ENCODE measurements at regions of chr10 and their contacts with region 1.

Region 1: GRCh38 chr10:96831867-96832720 is at the start of gene LCOR:
- DNase-seq: peak; percentile 75 to 88 (median 84)
- ATAC-seq: peak; percentile 85
- H3K4me3 ChIP-seq: peak within 1 kb of the TSS; percentile 65
- H3K4me3 Mint-ChIP-seq: peak within 1 kb of the TSS; percentile 84 to 96 (median 93)
- H3K27ac ChIP-seq: peak within 1 kb of the TSS; percentile 88
- H3K27ac Mint-ChIP-seq: peak within 1 kb of the TSS; percentile 88 to 99 (median 94)
- H3K4me1 ChIP-seq: peaks cover 25 to 26% of the 10 kb centered on the region in 2 donors
- H3K4me1 Mint-ChIP-seq: peaks cover 36 to 57% (median 51%) of the 10 kb centered on the region in 7 donors
- H3K27me3 ChIP-seq: no peaks in the 10 kb centered on the region
- H3K27me3 Mint-ChIP-seq: peaks cover 0 to 8% (median 0%) of the 10 kb centered on the region in 5 donors
- total RNA-seq, gene LCOR: 25.3 to 55.9 (median 51.8) TPM

Region 2: GRCh38 chr10:95693668-95694534 is 1138.2 kb before region 1 on chr10 and contains the start of gene TCTN3:
- CTCF ChIA-PET with region 1: no interaction called
- POLR2A ChIA-PET with region 1: interaction called, 3 read pairs
- intact Hi-C with region 1: loop called (anchors 2 to 10 kb)
- DNase-seq: peak; percentile 85 to 98 (median 97)
- ATAC-seq: peak; percentile 98
- H3K4me3 ChIP-seq: peak within 1 kb of the TSS; percentile 93
- H3K4me3 Mint-ChIP-seq: peak within 1 kb of the TSS; percentile 89 to 99 (median 96)
- H3K27ac ChIP-seq: peak within 1 kb of the TSS; percentile 95
- H3K27ac Mint-ChIP-seq: peak within 1 kb of the TSS; percentile 91 to 98 (median 96)
- H3K4me1 ChIP-seq: peaks cover 11 to 15% of the 10 kb centered on the region in 2 donors
- H3K4me1 Mint-ChIP-seq: peaks cover 27 to 51% (median 42%) of the 10 kb centered on the region in 7 donors
- H3K27me3 ChIP-seq: no peaks in the 10 kb centered on the region
- H3K27me3 Mint-ChIP-seq: peaks cover 0 to 9% (median 2%) of the 10 kb centered on the region in 5 donors
- total RNA-seq, gene TCTN3: 16.2 to 38.3 (median 22.2) TPM

Region 3: GRCh38 chr10:96395931-96396877 is 435.9 kb before region 1 on chr10:
- CTCF ChIA-PET with region 1: interaction called, 3 read pairs
- POLR2A ChIA-PET with region 1: no interaction called
- intact Hi-C with region 1: loop called (anchors 1 kb)
- DNase-seq: peak; percentile 35 to 67 (median 56)
- ATAC-seq: peak; percentile 89
- H3K4me3 ChIP-seq: peak overlapping the region; percentile 28
- H3K4me3 Mint-ChIP-seq: peak overlapping the region in 7 of 10 donors; percentile 6 to 80 (median 66)
- H3K27ac ChIP-seq: no peak overlapping the region
- H3K27ac Mint-ChIP-seq: no peak overlapping the region
- H3K4me1 ChIP-seq: no peaks in the 10 kb centered on the region
- H3K4me1 Mint-ChIP-seq: peaks cover 0 to 5% (median 0%) of the 10 kb centered on the region in 7 donors
- H3K27me3 ChIP-seq: no peaks in the 10 kb centered on the region
- H3K27me3 Mint-ChIP-seq: peaks cover 7 to 52% (median 16%) of the 10 kb centered on the region in 5 donors

Region 4: GRCh38 chr10:96642973-96643372 is 189.1 kb before region 1 on chr10:
- CTCF ChIA-PET with region 1: interaction called, 3 read pairs
- POLR2A ChIA-PET with region 1: no interaction called
- intact Hi-C with region 1: loop called (anchors 1 kb)
- DNase-seq: peak in 2 of 9 donors; percentile 33 to 57
- ATAC-seq: peak; percentile 63
- H3K4me3 ChIP-seq: no peak overlapping the region
- H3K4me3 Mint-ChIP-seq: no peak overlapping the region
- H3K27ac ChIP-seq: no peak overlapping the region
- H3K27ac Mint-ChIP-seq: no peak overlapping the region
- H3K4me1 ChIP-seq: no peaks in the 10 kb centered on the region
- H3K4me1 Mint-ChIP-seq: peaks cover 0 to 22% (median 4%) of the 10 kb centered on the region in 7 donors
- H3K27me3 ChIP-seq: no peaks in the 10 kb centered on the region
- H3K27me3 Mint-ChIP-seq: peaks cover 0 to 8% (median 0%) of the 10 kb centered on the region in 5 donors

Region 5: DNA sequence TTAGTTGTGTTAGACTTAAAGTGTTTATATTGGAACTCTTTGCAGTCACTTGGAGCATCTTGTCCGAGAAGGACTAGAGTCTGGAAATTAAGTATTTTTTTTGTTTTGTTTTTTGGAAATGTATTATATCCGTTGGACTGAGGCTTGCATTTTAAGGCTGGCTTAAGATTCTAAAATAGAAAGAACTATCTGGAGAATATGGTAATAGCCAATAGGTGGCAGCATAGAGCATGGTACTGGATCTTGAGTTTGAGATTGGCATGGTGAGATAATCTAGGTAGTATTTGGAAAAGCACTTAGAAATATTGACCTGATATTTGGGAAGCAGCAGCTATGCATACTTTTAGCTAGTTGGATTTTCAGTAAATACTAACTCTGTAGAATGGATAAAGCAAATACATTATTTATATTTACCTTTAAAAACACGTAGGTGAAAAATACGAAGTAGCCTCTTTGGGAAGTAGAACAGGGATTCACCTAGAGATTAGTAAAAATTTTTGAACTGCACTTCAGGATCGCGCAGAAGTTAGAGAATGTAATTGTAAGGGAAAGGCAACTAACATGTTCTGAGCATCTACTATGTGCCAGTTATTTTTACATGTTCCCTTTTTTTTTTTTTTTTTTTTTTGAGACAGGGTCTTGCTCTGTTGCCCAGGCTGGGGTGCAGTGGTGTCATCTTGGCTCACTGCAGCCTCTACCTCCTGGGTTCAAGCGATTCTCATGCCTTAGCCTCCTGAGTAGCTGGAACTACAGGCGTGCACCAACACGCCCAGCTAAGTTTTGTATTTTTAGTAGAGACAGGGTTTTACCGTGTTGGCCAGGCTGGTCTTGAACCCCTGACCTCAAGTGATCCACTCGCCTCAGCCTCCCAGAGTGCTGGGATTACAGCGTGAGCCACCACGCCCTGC is 78.6 kb after region 1 on chr10:
- CTCF ChIA-PET with region 1: interaction called, 3 read pairs
- POLR2A ChIA-PET with region 1: no interaction called
- intact Hi-C with region 1: loop called in 1 of 2 experiments (anchors 5 kb)
- DNase-seq: peak in 5 of 9 donors; percentile 15 to 36 (median 29)
- ATAC-seq: peak; percentile 80
- H3K4me3 ChIP-seq: no peak overlapping the region
- H3K4me3 Mint-ChIP-seq: no peak overlapping the region
- H3K27ac ChIP-seq: no peak overlapping the region
- H3K27ac Mint-ChIP-seq: peak overlapping the region in 1 of 9 donors; percentile 4
- H3K4me1 ChIP-seq: peaks cover 3 to 4% of the 10 kb centered on the region in 2 donors
- H3K4me1 Mint-ChIP-seq: peaks cover 3 to 51% (median 33%) of the 10 kb centered on the region in 7 donors
- H3K27me3 ChIP-seq: no peaks in the 10 kb centered on the region
- H3K27me3 Mint-ChIP-seq: no peaks in the 10 kb centered on the region

Region 6: DNA sequence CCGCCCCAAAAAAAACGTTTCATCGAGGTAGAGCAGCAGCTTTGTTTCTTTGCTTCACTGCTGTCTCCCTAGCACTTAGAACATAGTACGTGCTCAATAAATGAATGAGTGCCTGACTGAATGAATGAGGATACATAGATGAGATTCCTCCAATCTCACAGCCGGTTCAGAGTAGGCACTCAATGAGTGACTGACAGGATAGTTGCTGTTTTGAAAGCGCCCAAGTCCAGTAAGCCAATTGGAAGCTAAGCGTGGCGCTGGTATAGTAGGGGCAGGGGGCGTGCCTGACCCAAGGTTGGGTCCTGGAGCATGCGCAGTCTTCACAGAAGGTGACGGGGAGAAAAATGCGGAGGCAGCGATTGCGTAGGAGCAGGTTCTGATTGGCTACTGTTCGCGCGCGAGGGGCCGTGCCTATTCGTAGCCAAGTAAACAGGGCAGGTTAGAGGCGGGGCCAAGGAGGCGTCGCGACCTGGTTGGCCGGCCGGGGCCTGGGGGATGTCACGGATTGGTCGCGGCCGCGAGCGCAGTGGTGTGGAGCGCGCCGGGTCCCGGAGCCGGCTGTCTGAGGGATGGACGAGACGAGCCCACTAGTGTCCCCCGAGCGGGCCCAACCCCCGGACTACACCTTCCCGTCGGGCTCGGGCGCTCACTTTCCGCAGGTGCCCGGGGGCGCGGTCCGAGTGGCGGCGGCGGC is 808.2 kb after region 1 on chr10 and contains the start of gene PI4K2A:
- CTCF ChIA-PET with region 1: no interaction called
- POLR2A ChIA-PET with region 1: no interaction called
- intact Hi-C with region 1: loop called in 1 of 2 experiments (anchors 2 kb)
- DNase-seq: peak; percentile 89 to 99 (median 98)
- ATAC-seq: peak; percentile 98
- H3K4me3 ChIP-seq: peak within 1 kb of the TSS; percentile 82
- H3K4me3 Mint-ChIP-seq: peak within 1 kb of the TSS; percentile 64 to 99 (median 94)
- H3K27ac ChIP-seq: peak within 1 kb of the TSS; percentile 70
- H3K27ac Mint-ChIP-seq: peak within 1 kb of the TSS; percentile 69 to 94 (median 89)
- H3K4me1 ChIP-seq: peaks cover 4 to 15% of the 10 kb centered on the region in 2 donors
- H3K4me1 Mint-ChIP-seq: peaks cover 10 to 34% (median 26%) of the 10 kb centered on the region in 7 donors
- H3K27me3 ChIP-seq: no peaks in the 10 kb centered on the region
- H3K27me3 Mint-ChIP-seq: no peaks in the 10 kb centered on the region
- total RNA-seq, gene PI4K2A: 9.0 to 33.8 (median 11.0) TPM